ENCODE measurements at regions of chr15 and their contacts with region 1.

Region 1: GRCh38 chr15:44066316-44066740 is 128.7 kb downstream of the FRMD5 start:
- DNase-seq: peak in 4 of 6 donors; percentile 33 to 64 (median 45)
- ATAC-seq: peak; percentile 60 to 84 (median 80)
- H3K4me3 ChIP-seq: no peak overlapping the region
- H3K27ac ChIP-seq: no peak overlapping the region
- H3K4me1 ChIP-seq: no peaks in the 10 kb centered on the region
- H3K27me3 ChIP-seq: no peaks in the 10 kb centered on the region
- CTCF ChIP-seq: peak; percentile 37 to 72 (median 62)

Region 2: GRCh38 chr15:43903864-43904290 is 162.5 kb before region 1 on chr15:
- intact Hi-C with region 1: loop called in 2 of 3 experiments (anchors 10 kb)
- DNase-seq: peak in 2 of 6 donors; percentile 13 to 54
- ATAC-seq: peak; percentile 63 to 86 (median 78)
- H3K4me3 ChIP-seq: no peak overlapping the region
- H3K27ac ChIP-seq: no peak overlapping the region
- H3K4me1 ChIP-seq: no peaks in the 10 kb centered on the region
- H3K27me3 ChIP-seq: no peaks in the 10 kb centered on the region
- CTCF ChIP-seq: peak; percentile 64 to 75 (median 69)

Region 3: GRCh38 chr15:44340410-44340809 is 274.1 kb after region 1 on chr15:
- intact Hi-C with region 1: no loop called
- DNase-seq: peak in 1 of 6 donors; percentile 12
- ATAC-seq: peak; percentile 55 to 83 (median 72)
- H3K4me3 ChIP-seq: no peak overlapping the region
- H3K27ac ChIP-seq: no peak overlapping the region
- H3K4me1 ChIP-seq: no peaks in the 10 kb centered on the region
- H3K27me3 ChIP-seq: no peaks in the 10 kb centered on the region
- CTCF ChIP-seq: no peak